OCI-LY7 (cell line): ENCODE measurements at regions of chr19 and their contacts with region 1.

Region 1: GRCh38 chr19:7605490-7606222 is 10.0 kb downstream of the CAMSAP3 start:
- DNase-seq: peak; percentile 96
- H3K4me3 ChIP-seq: peak overlapping the region; percentile 26
- H3K27ac ChIP-seq: no peak overlapping the region
- H3K4me1 ChIP-seq: no peaks in the 10 kb centered on the region
- CTCF ChIP-seq: no peak

Region 2: DNA sequence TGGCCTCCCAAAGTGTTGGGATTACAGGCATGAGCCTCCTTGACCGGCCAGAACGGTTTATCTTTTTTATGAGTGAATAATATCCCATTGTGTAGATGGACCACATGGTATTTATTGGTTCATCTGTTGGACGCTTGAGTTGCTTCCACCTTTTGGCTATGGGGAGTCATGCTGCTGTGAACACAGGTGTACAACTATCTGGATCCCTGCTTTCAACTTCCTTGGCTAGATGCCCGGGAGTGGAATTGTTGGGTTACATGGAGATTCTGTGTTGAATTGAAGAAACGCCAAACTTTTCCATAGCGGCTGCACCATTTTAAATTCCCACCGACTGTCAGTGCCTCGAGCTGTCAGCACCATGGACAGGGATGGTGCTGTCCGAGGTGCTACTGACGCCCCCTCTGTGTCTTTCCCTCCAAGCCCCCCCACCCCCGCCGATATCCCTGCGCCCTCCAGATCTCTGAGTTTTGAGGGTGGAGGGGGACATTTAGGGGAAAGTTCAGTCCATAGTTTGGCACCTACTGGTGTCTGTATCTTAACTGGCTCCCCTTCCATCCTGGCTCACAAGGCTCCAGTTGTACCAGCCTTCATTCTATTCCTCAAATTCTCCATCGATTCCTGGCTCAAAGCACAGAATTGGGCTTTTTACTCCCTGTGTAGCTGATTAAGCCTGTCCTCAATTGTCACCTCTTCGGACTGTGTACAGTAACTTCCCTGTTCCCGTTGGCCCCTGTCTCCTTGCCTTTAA is 42.8 kb before region 1 on chr19:
- CTCF ChIA-PET with region 1: interaction called, 14 read pairs
- POLR2A ChIA-PET with region 1: no interaction called
- intact Hi-C with region 1: no loop called
- DNase-seq: no peak
- H3K4me3 ChIP-seq: no peak overlapping the region
- H3K27ac ChIP-seq: no peak overlapping the region
- H3K4me1 ChIP-seq: no peaks in the 10 kb centered on the region
- CTCF ChIP-seq: no peak

Region 3: DNA sequence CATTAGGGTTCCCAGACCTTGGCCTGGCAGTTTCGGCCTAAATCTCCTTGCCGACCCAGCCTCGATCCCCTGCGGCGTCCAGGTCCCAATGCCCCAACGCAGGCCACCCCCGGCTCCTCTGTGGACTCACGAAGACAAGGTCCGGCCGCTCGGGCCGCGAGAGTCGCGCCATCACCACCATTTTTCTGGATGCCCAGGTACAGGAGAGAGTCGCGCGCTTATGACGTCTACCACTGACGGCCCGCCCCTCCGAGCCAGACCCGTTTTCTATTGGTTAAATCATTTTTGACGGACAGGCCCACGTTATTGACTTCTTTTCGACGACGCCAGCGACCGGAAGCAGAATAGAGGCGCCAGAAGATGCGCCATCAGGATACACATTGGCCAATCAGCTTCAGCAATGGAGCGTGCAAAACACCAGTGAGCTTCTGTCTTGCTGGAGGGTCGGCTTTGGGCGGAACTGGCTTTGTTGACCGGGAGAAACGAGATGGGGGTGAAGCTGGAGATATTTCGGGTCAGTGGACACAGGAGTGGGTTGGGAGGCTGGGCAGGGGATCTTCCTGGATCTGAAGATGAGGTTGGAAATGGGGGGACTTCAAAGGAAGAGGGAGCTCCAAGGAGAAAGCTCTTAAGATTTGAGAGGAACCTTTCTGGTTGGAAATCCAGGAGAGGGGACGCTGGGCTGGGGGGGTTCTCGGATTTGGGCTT is 23.8 kb after region 1 on chr19 and contains the starts of genes PET100 and XAB2:
- CTCF ChIA-PET with region 1: no interaction called
- POLR2A ChIA-PET with region 1: interaction called, 10 read pairs
- intact Hi-C with region 1: no loop called
- DNase-seq: peak; percentile 99
- H3K4me3 ChIP-seq: peak within 1 kb of the TSS; percentile 92
- H3K27ac ChIP-seq: no peak within 1 kb of the TSS
- H3K4me1 ChIP-seq: peaks cover 15% of the 10 kb centered on the region
- CTCF ChIP-seq: no peak
- total RNA-seq, gene PET100: 48.8 and 65.4 TPM in 2 replicates
- total RNA-seq, gene XAB2: 35.0 and 36.6 TPM in 2 replicates